Activated CD4-positive, alpha-beta memory T cell treated with anti-CD3 and anti-CD28 coated beads for 36 hours (primary cell): ENCODE measurements at regions of chr1 and their contacts with region 1.

Region 1: GRCh38 chr1:11893907-11894251 is 32.3 kb downstream of the KIAA2013 start:
- DNase-seq: peak; percentile 78
- H3K4me3 Mint-ChIP-seq: peak overlapping the region; percentile 41
- H3K27ac Mint-ChIP-seq: peak overlapping the region; percentile 33
- H3K4me1 Mint-ChIP-seq: no peaks in the 10 kb centered on the region
- H3K27me3 Mint-ChIP-seq: peaks cover 22% of the 10 kb centered on the region

Region 2: DNA sequence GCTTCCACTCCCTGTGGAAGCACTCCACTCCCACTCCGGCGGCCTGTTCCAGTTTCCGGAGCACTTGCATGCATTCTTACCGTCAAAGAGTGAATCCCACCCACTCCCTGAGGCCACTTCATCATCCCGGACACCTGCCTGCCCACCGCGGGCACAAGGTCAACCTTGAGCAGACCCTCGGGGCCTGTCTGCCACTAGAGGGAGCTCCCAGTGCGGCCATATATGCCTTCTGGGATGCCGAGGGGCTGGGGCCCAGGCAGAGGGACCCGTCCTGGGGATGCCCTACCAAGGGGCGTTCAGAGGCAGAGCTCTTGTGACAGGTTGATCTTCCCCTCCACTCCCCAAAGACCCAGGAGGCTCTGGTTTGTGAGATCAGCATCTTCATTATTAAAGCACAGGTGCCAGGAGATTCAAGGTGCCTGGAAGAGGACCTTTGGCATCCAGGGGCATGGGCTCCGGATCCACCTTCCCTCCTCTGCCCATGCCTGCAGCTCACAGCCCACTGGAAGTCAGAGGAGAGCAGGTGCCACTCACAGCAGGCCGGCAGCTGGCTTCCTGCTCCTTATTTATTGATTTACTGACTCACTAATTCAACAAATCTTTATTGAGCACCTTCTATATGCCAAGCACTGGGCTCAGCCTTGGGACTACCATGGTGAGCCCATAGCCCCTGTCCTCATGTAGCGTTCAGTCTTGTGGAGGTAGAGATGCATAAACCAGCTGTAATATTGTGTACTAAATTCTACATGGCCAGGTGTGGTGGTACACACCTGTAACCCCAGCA is 573.5 kb before region 1 on chr1:
- CTCF ChIA-PET with region 1: no interaction called
- POLR2A ChIA-PET with region 1: no interaction called
- intact Hi-C with region 1: no loop called
- DNase-seq: peak; percentile 47
- H3K4me3 Mint-ChIP-seq: no peak overlapping the region
- H3K27ac Mint-ChIP-seq: no peak overlapping the region
- H3K4me1 Mint-ChIP-seq: peaks cover 3% of the 10 kb centered on the region
- H3K27me3 Mint-ChIP-seq: peaks cover 7% of the 10 kb centered on the region

Region 3: DNA sequence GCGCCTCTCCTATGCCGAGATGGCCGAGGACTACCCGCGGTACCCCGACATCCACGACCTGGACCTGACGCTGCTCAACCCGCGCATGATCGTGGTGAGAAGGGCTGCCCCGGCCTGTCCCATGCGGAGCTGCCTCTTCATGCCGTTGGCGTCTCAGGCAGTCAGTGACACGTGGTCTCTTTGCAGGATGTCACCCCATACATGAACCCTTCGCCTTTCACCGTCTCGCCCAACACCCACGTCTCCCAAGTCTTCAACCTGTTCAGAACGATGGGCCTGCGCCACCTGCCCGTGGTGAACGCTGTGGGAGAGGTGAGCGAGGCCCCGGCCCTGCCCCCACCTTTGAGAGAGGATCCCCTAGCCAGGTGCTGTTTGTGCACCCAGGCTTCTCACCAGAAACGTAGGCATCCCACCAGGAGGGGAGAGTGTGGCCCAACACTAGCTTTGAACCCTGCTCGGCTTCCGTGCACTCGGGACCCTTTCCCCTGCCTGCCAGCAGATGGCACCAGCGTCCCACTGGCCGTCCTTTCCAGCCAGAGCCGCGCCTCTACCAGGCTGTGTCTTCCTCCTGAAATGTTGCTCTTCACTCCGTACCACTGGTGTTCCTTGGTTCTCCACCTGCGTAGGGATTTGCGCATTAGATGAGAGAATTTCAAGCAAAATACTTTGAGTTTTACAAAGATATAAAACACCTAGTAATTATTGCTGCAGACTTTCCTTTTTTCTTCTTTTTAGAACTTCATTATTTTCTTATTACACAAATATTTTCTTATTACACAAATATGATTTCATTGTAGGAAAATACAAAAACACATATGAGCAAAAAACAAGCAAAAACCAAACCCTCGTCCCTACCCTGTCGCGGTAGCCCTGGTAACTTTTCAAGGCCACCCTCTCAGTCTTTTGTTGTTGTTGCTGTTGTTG is 55.3 kb before region 1 on chr1:
- CTCF ChIA-PET with region 1: interaction called, 34 read pairs
- POLR2A ChIA-PET with region 1: no interaction called
- intact Hi-C with region 1: loop called (anchors 1 kb)
- DNase-seq: peak; percentile 81
- H3K4me3 Mint-ChIP-seq: no peak overlapping the region
- H3K27ac Mint-ChIP-seq: no peak overlapping the region
- H3K4me1 Mint-ChIP-seq: no peaks in the 10 kb centered on the region
- H3K27me3 Mint-ChIP-seq: no peaks in the 10 kb centered on the region

Region 4: DNA sequence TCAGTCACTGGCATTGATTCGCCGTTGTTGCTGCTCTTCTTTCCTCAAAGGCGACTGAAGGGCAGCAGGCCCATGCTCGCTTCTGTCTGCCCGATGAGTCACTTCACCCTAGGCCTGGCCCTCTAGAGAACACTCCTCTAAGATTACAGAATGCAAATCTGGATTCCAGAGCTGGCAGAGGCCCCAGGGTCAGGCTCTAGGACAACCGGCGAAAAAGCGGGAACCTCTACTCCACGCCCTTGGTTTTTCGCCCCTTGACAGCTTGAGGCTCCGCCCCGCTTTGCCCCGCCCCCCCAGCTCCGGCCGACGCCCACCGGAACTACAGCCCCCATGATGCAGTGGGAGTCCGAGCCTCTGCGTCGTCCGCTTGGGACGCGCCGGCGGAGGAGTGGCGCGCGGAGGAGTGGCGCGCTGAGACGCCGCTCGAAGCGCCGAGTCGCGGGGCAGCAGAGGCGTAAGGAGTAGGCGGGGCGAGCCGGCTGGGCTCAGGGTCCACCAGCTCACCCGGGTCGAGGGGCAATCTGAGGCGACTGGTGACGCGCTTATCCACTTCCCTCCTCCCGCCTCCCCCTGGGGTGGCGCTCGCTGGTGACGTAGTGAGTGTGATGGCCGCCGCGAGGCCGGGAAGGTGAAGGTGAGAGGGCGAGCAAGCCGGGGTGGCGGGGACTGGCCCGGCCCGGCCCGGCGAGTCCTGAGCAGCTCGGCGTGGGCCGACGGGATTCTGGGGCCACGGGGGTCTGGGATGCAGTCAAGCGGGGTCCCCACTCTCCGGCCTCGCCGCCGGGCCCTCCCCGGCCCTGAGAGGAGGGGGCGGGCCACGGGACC is 86.2 kb after region 1 on chr1 and contains the start of gene MFN2:
- CTCF ChIA-PET with region 1: no interaction called
- POLR2A ChIA-PET with region 1: no interaction called
- intact Hi-C with region 1: no loop called
- DNase-seq: peak; percentile 95
- H3K4me3 Mint-ChIP-seq: peak within 1 kb of the TSS; percentile 90
- H3K27ac Mint-ChIP-seq: peak within 1 kb of the TSS; percentile 90
- H3K4me1 Mint-ChIP-seq: peaks cover 41% of the 10 kb centered on the region
- H3K27me3 Mint-ChIP-seq: no peaks in the 10 kb centered on the region
- total RNA-seq, gene MFN2: 52.0 to 58.1 TPM

Region 5: GRCh38 chr1:12031039-12031980 is 137.4 kb after region 1 on chr1:
- CTCF ChIA-PET with region 1: no interaction called
- POLR2A ChIA-PET with region 1: no interaction called
- intact Hi-C with region 1: no loop called
- DNase-seq: peak; percentile 65
- H3K4me3 Mint-ChIP-seq: no peak overlapping the region
- H3K27ac Mint-ChIP-seq: no peak overlapping the region
- H3K4me1 Mint-ChIP-seq: no peaks in the 10 kb centered on the region
- H3K27me3 Mint-ChIP-seq: no peaks in the 10 kb centered on the region